PC-3 (cell line): ENCODE measurements at regions of chr2 and their contacts with region 1.

Region 1: DNA sequence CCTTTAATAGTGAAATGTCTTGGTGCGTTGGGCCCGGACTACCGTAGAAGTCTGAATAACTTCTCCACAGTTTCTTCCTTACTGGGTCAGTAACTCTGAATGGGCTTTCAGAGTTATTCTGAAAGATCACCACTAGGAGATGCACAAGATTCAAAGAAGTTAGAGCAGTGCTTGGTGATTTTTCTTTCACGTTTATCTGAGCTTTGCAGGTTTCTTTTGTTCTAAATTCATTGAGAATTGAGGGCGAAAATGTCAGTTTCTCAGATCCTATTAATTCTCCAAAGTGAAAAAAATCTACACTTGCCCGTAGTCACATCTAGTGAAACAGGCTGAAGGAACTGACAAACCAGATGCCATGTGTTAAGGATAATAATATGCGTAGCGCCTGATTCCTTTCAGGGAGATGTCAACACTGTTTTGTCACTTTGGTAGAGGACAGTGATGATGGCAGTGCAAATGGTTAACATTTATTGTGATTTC is 70.1 kb downstream of the QPCT start:
- DNase-seq: peak; percentile 84
- ATAC-seq: peak; percentile 72
- H3K4me3 ChIP-seq: no peak overlapping the region
- H3K27ac ChIP-seq: no peak overlapping the region
- H3K4me1 ChIP-seq: peaks cover 16% of the 10 kb centered on the region
- H3K27me3 ChIP-seq: no peaks in the 10 kb centered on the region
- CTCF ChIP-seq: peak; percentile 94

Region 2: DNA sequence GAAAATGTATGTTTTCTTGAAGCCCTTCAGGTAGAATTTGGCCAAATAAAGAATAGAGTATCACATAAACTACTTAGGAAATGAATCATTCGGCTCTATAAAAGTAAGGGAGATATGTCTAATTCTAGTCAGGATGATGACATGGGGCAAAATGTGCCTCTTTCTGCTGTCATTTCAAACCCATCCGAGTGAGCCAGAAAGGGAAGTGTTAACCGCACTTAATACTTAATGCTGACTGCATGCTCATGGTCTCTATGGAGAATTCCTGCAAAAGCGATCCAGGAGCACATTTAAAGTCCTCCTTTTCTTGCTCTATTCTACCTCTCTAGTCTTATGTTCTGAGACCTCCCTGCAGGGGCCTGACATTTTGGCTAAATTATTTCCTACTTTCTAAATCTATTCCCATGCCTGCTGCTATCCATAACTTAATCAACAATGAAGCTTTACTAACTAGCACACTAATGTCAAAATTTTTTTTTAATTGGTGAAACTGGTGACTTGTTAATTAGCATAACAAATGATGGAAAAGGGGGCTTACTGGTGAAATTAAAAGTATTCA is 129.6 kb after region 1 on chr2:
- CTCF ChIA-PET with region 1: no interaction called
- POLR2A ChIA-PET with region 1: no interaction called
- intact Hi-C with region 1: loop called (anchors 5 kb)
- DNase-seq: peak; percentile 27
- ATAC-seq: peak; percentile 76
- H3K4me3 ChIP-seq: no peak overlapping the region
- H3K27ac ChIP-seq: no peak overlapping the region
- H3K4me1 ChIP-seq: peaks cover 17% of the 10 kb centered on the region
- H3K27me3 ChIP-seq: no peaks in the 10 kb centered on the region
- CTCF ChIP-seq: no peak

Region 3: DNA sequence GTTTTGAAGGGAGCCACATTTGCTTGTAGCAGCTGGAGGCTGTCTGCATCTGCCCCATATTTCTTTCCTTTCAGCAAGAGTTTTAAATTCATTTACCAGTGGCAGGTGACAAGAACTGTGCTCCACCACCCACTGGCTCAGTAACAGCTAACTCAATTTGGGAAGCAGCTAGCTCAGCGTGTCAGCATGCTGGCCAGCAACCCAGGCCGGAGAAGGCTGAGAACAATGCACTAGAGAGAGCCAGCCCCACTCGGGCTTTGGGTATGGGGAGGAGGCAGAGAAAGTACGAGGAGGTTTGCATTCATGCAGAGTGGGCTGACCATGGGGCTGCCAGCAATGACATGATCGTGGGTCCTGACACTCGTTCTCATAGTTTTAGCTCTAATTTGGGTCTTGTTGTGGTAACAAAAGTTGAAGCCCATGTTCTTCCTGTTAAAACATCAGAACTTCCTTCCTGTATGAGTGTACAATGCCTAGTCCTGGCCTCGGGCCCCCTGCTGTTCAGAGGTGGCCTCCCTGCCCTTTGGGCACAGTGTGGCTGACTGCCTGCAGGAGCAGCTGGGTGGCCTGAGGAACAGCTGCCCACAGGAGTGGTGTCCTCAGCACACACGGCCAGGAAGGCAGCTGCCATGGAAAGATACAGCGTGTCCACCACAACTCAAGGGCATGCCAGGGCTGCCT is 234.0 kb after region 1 on chr2:
- CTCF ChIA-PET with region 1: interaction called, 9 read pairs
- POLR2A ChIA-PET with region 1: no interaction called
- intact Hi-C with region 1: loop called (anchors 10 kb)
- DNase-seq: no peak
- ATAC-seq: no peak
- H3K4me3 ChIP-seq: no peak overlapping the region
- H3K27ac ChIP-seq: no peak overlapping the region
- H3K4me1 ChIP-seq: peaks cover 36% of the 10 kb centered on the region
- H3K27me3 ChIP-seq: no peaks in the 10 kb centered on the region
- CTCF ChIP-seq: no peak

Region 4: DNA sequence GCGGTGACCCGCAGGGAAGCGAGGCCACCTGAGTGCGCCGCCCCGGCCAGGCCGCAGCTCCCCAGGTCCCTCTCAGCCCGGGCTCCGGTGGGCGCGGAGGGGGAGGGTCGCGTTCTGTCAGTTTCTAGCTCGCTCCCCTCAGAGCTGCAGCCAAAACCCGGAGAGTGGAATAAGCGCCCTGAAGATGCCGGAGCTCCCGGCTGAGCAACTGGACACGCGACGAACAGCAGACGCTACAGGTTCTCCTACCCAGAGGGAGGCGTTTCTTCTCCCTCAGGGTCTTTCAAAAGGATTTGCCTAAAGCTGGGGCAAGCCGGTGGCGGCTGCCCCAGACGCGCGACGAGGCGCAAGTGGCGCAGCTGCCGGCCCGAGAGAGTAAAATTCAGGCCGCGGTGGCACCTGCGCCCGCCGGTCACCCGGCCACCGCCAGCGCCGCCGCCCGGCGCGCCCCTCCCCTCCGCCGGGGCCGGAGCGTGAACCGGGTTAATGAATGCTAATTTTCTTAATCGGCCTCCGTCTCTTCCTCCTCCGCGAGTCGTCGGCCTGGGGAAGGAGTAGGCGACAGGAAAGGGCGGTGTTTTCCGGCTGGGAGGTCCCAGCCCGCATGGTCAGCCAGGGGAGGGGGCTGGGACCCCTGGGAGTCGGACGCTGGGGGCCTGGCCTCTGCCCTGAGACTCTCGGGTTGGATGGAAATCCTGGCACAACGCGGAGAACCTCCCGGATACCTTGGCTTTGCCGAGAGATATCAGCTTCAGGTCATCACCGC is 257.8 kb after region 1 on chr2:
- CTCF ChIA-PET with region 1: interaction called, 4 read pairs
- POLR2A ChIA-PET with region 1: no interaction called
- intact Hi-C with region 1: loop called (anchors 1 kb)
- DNase-seq: peak; percentile 81
- ATAC-seq: peak; percentile 40
- H3K4me3 ChIP-seq: peak overlapping the region; percentile 90
- H3K27ac ChIP-seq: 0 out of 2 replicates have a peak overlapping the region, but pooled peaks have one; percentile 2
- H3K4me1 ChIP-seq: peaks cover 35% of the 10 kb centered on the region
- H3K27me3 ChIP-seq: no peaks in the 10 kb centered on the region
- CTCF ChIP-seq: no peak

Region 5: GRCh38 chr2:37832590-37833197 is 418.2 kb after region 1 on chr2:
- CTCF ChIA-PET with region 1: interaction called, 48 read pairs
- POLR2A ChIA-PET with region 1: no interaction called
- intact Hi-C with region 1: loop called (anchors 1 kb)
- DNase-seq: peak; percentile 94
- ATAC-seq: peak; percentile 99
- H3K4me3 ChIP-seq: no peak overlapping the region
- H3K27ac ChIP-seq: no peak overlapping the region
- H3K4me1 ChIP-seq: peaks cover 6% of the 10 kb centered on the region; the same call in 1 of the 2 replicates
- H3K27me3 ChIP-seq: no peaks in the 10 kb centered on the region
- CTCF ChIP-seq: peak; percentile 95